Lower leg skin (tissue), 4 donors: ENCODE measurements at regions of chr16 and their contacts with region 1.

Region 1: DNA sequence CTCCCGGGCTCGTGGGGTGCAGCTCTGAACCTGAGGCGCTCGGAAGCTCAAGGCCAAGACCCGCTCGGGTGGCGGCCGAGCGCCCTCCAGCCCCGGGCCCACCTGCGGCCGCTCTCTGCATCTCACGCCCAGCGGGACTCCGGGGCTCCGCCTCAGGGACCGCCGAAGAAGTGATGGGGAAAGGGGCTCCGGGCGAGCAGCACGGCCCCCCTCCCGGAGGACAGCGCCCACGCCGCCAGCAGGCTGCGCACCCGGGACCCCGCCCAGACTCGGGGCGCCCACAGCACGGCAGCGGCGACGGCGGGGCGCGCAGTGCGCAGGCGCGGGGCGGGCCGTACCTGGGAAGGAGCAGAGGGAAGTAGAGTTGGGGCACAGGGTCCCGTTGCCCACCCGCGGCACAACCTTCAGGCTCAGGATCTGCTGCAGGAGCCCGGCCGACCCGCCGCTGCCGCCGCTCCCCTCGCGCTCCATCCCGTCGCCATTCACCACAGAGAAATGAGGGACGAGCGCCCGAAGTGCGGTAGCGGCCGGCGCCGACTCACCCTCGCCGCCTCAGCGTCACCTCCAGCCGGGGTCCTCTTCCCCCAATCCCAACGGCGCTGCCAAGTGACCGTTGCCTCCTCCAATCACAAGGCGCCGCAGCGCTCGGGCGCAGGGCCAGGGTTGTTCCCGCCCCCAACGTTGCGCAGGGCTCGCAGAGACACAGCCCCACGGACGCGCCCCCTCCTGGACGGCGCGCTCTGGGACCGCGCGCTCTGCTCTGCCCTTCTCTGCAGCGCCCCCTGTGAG is at the start of gene TMEM170A:
- DNase-seq: peak; percentile 98 to 100
- H3K4me3 ChIP-seq: peak within 1 kb of the TSS; percentile 76
- CTCF ChIP-seq: peak in 2 of 3 donors; percentile 82 to 99
- POLR2A ChIP-seq: no peak
- total RNA-seq, gene TMEM170A: 13.6 to 15.7 (median 15.0) TPM

Region 2: GRCh38 chr16:75206749-75207451 is 257.4 kb before region 1 on chr16 and contains the start of gene CTRB2:
- intact Hi-C with region 1: no loop called
- DNase-seq: no peak
- H3K4me3 ChIP-seq: no peak within 1 kb of the TSS
- CTCF ChIP-seq: no peak
- POLR2A ChIP-seq: no peak
- total RNA-seq, gene CTRB2: 1.9 TPM in 1 of 4 donors, not detected in the others

Region 3: GRCh38 chr16:75546293-75546692 is 82.0 kb after region 1 on chr16:
- intact Hi-C with region 1: loop called (anchors 5 kb)
- DNase-seq: peak in 1 of 2 donors; percentile 52
- H3K4me3 ChIP-seq: no peak overlapping the region
- CTCF ChIP-seq: no peak
- POLR2A ChIP-seq: no peak

Region 4: DNA sequence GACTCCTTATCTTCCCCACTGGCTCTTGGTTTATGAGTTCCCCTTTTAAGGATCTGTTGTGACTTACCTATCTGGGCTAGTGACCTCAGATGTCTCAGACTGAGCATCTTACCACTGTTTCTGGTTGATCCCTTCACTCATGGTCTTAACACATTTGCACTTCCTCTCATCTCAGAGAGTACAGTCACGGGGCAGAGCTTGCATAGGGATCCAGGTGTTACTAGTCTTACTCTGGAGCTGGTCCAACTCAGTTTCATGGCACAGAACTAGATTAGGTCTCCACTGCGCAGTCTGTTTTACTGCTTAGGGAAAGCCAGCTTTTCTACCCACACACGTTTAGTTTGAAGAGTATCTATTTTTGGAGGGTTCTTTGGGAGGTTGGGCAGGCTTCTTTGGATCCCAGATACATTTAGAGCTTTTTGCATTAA is 112.1 kb after region 1 on chr16:
- intact Hi-C with region 1: no loop called
- DNase-seq: peak in 1 of 2 donors; percentile 58
- H3K4me3 ChIP-seq: no peak overlapping the region
- CTCF ChIP-seq: no peak
- POLR2A ChIP-seq: no peak

Region 5: DNA sequence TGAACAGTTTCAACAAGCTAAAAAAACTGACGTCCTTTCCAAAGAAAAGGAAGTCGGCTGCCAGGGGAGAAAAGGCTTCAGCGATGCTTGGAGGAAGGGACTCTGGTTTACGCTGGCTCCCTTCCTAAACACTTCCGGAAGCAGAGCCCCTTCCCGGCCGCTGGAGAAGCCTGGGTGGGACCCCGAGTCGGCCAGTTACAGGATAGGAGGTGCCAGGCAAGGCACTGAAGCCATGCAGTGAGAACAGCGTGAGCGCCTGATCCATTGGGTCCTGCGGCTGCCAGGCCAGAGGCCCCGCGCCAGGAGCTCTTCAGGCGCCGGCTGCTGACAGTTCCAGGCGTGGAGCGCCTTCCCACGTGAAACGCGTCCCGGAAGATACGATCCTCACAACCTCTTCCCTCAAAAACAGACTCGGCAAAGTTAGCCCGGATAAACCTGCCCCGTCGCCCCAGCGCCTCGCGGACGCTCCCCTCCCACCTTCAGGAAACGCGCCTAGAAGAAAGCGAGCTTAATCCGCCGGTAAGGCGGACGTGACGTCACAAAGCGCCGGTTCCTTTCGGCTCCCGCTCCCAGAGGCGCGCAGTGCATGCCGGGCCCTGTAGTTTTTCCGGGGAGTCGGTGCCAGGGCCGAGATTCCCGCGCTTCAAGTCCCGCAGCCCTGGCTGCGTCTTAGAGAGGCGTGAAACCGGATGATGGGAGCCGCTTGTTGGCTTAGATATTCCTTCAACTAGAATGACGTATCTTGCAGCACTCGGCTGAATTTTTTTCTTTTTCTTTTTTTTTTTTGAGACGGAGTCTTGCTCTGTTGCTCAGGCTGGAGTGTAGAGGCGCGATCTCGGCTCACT is 158.7 kb after region 1 on chr16 and contains the start of gene ADAT1:
- intact Hi-C with region 1: loop called (anchors 10 kb)
- DNase-seq: peak; percentile 98 to 100
- H3K4me3 ChIP-seq: peak within 1 kb of the TSS; percentile 57
- CTCF ChIP-seq: no peak
- POLR2A ChIP-seq: peak in 1 of 2 donors; percentile 13
- total RNA-seq, gene ADAT1: 36.5 to 48.9 (median 42.1) TPM

Region 6: DNA sequence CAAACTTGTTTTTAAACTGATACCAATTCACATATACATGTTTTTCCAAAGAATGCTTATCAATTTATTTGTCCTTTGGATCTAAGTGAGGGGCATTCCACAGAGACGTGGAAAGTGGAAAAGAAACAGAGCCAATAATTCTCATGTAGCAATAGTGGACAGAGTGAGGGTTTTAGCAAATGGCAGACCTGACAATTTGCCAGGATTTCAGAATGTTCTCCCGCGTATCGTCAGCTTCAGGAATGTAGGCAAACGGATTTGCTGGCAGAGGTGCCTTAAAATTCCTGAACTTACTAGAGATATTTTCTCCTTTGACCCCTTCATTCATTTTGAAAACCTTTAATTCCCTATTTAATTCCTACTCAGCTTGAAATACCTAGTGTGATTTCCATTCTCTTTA is 455.3 kb after region 1 on chr16:
- intact Hi-C with region 1: no loop called
- DNase-seq: no peak
- H3K4me3 ChIP-seq: no peak overlapping the region
- CTCF ChIP-seq: no peak
- POLR2A ChIP-seq: no peak